ENCODE measurements at regions of chr11 and their contacts with region 1.

Region 1: DNA sequence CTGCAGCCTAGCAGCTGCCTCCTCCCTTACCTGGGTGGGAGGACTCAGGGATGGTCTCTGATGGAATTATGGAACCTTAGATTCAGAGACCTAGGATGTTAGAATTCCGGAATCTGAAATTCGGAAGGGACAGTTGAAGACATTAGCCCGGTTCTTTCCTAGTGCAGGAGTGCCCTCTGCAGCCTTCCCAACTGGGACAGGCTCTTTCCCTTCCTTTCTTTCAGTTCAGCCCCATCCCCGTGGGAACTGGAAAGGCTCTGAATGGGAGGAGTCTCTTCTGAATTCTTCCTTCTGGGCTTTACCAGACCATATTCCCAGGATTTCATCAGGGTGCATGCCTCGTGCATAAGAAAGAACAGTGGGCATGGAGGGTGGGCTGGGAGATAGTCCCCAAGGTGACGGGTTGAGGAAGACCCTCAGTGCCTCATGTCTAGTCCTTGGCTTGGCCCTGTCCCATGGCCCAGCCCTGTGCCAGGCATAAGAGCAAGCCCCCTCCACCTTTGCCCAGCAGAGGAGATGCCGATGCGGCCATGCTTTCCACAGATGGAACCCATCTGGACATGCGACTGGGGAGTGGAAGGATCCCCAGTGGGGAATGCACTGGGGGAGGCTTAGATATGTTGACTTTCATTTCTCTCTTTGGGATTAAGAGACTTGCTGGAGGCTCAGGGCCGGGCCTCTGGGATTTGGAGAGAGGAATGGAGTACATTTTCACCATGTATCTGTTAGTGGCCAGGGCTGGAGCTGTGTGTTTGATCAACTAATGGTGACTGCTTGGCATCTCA is 14.4 kb downstream of the DNAJB13 start:
- DNase-seq: no peak
- H3K4me3 ChIP-seq: no peak overlapping the region
- H3K27ac ChIP-seq: no peak overlapping the region
- H3K4me1 ChIP-seq: peaks cover 17% of the 10 kb centered on the region
- CTCF ChIP-seq: no peak

Region 2: DNA sequence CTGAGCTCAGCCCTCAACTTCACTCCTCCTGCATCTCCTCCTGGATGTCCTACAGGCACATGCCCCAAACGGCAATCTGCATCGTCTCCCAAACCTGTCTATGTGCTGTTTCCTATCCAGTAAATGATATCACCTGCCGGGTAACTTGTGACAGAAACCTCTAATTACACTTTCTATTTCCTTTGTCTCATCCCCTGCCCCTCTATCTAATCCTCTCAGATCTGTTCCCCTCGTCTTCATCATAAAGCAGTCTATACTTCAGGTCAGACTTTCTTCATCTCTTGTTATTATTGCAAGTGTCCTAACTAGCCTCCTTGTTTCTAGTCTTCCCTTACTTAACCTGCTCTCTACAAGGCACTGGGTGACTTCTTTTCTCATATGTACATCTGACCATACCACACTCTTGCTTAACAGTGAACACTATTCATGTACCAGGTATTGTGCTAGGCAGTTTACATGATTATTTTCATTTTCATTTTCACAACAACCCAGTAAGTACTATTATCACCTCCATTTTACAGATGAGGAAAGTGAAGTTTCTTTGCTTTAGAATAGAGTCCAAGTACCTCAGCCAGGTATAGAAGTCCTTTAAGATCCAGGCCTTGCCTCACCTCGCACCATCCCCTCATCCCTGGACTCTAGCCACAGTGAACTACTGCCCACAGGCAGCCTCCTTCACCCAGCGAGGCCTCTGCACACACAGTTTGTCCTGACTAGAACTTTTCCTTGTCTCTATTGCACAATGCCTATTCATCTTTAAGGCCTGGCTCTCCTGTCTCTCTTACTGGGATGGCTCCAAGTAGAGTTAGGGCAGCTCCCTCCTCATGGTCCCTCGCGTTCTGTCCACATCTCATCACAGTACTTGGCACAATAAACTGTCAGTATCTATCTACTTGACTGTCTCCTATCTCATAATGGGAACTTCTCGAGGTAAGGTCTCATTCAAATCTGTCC is 65.7 kb after region 1 on chr11:
- CTCF ChIA-PET with region 1: no interaction called
- POLR2A ChIA-PET with region 1: no interaction called
- intact Hi-C with region 1: loop called (anchors 5 kb)
- DNase-seq: no peak
- H3K4me3 ChIP-seq: no peak overlapping the region
- H3K27ac ChIP-seq: no peak overlapping the region
- H3K4me1 ChIP-seq: no peaks in the 10 kb centered on the region
- CTCF ChIP-seq: no peak

Region 3: DNA sequence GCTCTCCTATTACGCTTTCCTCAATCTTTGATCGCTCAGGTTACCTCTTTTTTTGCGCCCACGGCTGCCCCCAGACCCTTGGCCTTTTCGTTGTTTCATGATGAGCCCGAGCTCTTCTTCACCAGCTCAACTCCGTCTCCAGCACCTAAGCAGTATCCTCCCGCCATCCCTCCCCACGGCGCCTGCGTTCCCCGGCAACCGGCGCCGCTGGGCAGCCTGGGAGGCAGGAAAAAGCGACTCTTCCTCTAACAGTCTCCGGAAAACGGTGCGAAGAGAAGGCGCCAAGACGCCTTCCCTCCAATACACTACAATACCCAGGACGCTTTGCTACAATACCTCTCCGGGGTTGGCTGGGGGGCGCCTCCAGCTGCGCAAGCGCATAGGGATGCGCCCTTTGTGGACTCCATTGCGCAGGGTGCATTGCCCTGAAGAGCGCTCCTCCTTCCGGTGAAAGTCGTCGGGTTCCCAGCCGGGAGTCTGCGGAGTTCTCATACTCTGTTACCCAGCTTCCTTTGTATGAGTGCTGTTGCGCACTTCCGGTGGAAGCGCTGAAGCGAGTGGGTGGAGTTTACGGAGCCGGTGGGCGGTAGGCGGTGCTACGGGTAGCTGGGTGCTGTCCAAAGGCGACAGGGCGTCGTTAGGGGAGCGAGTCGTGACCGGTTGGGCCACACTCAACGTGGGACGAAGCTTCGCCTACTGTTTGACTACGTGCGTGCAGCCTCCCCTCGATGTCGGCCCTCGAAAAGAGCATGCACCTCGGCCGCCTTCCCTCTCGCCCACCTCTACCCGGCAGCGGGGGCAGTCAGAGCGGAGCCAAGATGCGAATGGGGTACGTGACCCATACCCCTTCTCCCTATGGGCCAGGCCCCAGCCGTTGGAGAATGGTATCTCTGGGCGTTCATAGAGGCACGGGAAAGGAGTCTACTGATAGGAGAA is 205.7 kb after region 1 on chr11 and contains the starts of genes C2CD3 and PPME1:
- CTCF ChIA-PET with region 1: no interaction called
- POLR2A ChIA-PET with region 1: no interaction called
- intact Hi-C with region 1: loop called (anchors 5 kb)
- DNase-seq: peak; percentile 100
- H3K4me3 ChIP-seq: peak within 1 kb of the TSS; percentile 93
- H3K27ac ChIP-seq: peak within 1 kb of the TSS; percentile 75
- H3K4me1 ChIP-seq: peaks cover 30% of the 10 kb centered on the region
- CTCF ChIP-seq: 0 out of 2 replicates have a peak, but pooled peaks have one; percentile 33
- total RNA-seq, gene C2CD3: 24.9 and 29.2 TPM in 2 replicates
- total RNA-seq, gene PPME1: 17.3 and 28.8 TPM in 2 replicates

Region 4: DNA sequence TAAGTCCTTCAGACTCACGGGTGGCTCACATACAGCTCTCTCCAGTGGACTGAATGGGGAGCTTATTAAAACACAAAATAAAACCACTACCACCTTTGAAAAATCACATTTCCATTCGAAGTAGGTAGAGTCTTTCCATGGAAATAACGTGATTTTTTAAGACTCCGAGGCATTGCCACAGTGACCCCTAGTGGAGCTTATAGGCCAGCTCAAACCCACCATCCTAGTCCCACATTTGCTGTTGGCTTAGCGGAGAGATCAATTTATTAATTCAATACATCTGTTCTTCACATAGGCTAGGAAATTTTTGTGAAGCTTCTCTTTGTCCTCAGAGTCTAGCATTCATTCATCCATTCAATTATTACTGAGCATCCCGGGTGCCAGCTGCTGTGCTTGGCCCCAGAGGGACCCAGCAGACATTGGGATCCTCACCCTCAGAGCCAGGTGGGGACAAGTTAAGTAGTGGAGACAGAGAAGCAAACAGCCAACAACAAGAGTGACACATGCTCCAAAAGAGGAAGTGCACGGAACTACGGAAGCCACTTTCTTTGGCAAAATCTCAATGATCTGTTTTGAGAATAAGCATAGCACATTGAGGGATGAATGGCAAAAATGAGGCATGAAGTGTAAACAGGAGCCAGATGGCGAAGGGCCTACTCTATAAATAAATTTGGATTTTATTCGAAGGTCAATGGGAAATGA is 356.4 kb after region 1 on chr11:
- CTCF ChIA-PET with region 1: no interaction called
- POLR2A ChIA-PET with region 1: no interaction called
- intact Hi-C with region 1: loop called (anchors 5 kb)
- DNase-seq: peak; percentile 31
- H3K4me3 ChIP-seq: no peak overlapping the region
- H3K27ac ChIP-seq: no peak overlapping the region
- H3K4me1 ChIP-seq: no peaks in the 10 kb centered on the region
- CTCF ChIP-seq: peak; percentile 87